Panc1 (cell line): ENCODE measurements at regions of chr1 and their contacts with region 1.

Region 1: GRCh38 chr1:223695941-223696340 is 16.4 kb upstream of the CAPN2 start:
- DNase-seq: no peak
- ATAC-seq: no peak
- H3K4me3 ChIP-seq: no peak overlapping the region
- H3K27ac ChIP-seq: no peak overlapping the region
- H3K4me1 ChIP-seq: peaks cover 12% of the 10 kb centered on the region
- H3K27me3 ChIP-seq: no peaks in the 10 kb centered on the region
- CTCF ChIP-seq: no peak

Region 2: GRCh38 chr1:223455470-223455869 is 240.5 kb before region 1 on chr1:
- CTCF ChIA-PET with region 1: no interaction called
- POLR2A ChIA-PET with region 1: no interaction called
- in situ Hi-C with region 1: no loop called
- intact Hi-C with region 1: no loop called
- DNase-seq: no peak
- ATAC-seq: no peak
- H3K4me3 ChIP-seq: no peak overlapping the region
- H3K27ac ChIP-seq: no peak overlapping the region
- H3K4me1 ChIP-seq: no peaks in the 10 kb centered on the region
- H3K27me3 ChIP-seq: peaks cover 2% of the 10 kb centered on the region; the same call in 1 of the 2 replicates
- CTCF ChIP-seq: no peak

Region 3: GRCh38 chr1:224052772-224053171 is 356.8 kb after region 1 on chr1:
- CTCF ChIA-PET with region 1: interaction called, 3 read pairs
- POLR2A ChIA-PET with region 1: no interaction called
- in situ Hi-C with region 1: no loop called
- intact Hi-C with region 1: loop called (anchors 5 kb)
- DNase-seq: peak; percentile 62
- ATAC-seq: no peak
- H3K4me3 ChIP-seq: no peak overlapping the region
- H3K27ac ChIP-seq: no peak overlapping the region
- H3K4me1 ChIP-seq: no peaks in the 10 kb centered on the region
- H3K27me3 ChIP-seq: no peaks in the 10 kb centered on the region
- CTCF ChIP-seq: no peak